AG04449 (cell line): ENCODE measurements at regions of chr22 and their contacts with region 1.

Region 1: GRCh38 chr22:36486619-36487384 is 5.4 kb upstream of the TXN2 start:
- DNase-seq: no peak
- H3K4me3 ChIP-seq: no peak overlapping the region
- CTCF ChIP-seq: peak; percentile 59

Region 2: DNA sequence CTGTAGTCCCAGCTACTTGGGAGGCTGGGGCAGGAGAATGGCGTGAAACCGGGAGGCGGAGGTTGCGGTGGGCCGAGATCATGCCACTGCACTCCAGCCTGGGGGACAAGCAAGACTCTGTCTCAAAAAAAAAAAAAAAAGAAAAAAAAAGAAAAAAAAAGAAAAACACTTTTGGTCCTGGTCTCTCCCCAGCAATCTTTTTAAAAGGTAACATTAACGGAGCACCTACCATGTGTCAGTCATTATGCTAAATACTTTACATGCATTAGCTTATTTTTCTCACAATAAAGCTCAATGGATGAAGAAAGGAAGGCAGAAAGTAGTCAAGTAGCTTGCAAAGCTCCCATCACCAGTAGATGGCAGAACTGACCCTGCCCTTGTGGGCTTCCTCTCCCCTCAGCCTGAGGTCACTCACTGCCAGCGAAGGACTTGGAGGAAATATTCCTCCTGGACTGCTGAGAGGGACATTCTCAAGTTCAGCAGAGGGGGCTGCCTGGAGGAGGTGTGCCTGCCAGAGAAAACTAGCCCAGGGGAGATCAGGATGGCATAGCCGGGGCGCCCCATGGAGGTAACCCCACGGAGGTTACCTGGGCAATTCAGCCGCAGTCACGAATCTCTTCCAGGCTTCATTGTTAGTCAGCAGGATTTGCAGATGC is 341.8 kb before region 1 on chr22:
- CTCF ChIA-PET with region 1: interaction called, 25 read pairs
- POLR2A ChIA-PET with region 1: no interaction called
- DNase-seq: no peak
- H3K4me3 ChIP-seq: no peak overlapping the region
- CTCF ChIP-seq: peak; percentile 72

Region 3: DNA sequence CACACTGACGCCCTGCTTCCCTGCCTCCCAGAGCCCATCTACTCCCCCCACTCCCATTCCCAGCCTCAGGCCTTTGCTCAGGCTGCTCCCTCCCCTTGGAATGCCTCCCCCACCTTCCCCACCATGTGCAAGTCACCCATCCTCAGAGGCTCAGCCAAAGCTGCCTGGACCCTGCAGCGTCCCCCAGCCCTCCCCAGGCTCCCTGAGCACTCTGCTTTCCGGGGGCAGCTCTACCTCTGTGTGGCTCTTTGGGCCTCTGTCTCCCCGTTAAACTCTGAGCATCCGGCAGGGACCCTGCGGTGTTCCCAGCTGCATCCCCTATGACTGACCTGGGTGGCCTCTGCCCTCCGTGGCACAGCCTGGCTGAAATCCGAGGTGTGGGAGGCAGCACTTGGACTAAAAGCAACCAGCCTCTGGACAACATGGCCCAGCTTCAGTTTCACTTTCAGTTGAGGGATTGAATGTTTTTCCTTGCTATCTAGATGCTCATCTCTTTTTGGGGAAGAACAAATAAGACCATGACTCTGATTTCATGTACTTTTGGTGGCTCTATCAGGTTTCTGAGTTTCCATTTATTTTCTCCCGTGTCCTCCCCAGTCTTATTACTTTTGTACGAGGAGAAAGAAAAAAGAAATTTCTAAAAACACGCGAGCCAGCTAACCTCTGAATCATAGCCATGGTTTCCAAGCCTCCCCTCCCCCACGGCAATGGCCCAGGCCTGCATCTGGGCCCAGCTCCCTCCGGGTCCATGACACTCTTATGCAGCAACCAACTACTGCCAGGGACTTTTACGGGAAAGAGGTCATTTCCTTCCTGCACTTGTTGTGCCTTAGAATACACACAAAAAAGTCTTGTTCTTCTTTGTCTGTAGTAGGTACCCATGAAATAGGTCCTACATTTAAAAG is 330.0 kb before region 1 on chr22:
- CTCF ChIA-PET with region 1: interaction called, 11 read pairs
- POLR2A ChIA-PET with region 1: no interaction called
- DNase-seq: no peak
- H3K4me3 ChIP-seq: peak overlapping the region; percentile 49
- CTCF ChIP-seq: no peak

Region 4: DNA sequence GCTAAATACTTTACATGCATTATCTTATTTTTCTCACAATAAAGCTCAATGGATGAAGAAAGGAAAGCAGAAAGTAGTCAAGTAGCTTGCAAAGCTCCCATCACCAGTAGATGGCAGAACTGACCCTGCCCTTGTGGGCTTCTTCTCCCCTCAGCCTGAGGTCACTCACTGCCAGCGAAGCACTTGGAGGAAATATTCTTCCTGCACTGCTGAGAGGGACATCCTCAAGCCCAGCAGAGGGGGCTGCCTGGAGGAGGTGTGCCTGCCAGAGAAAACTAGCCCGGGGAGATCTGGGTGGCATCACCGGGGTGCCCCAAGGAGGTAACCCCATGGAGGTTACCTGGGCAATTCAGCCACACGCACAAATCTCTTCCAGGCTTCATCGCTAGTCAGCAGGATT is 291.8 kb before region 1 on chr22:
- CTCF ChIA-PET with region 1: interaction called, 64 read pairs
- POLR2A ChIA-PET with region 1: no interaction called
- DNase-seq: no peak
- H3K4me3 ChIP-seq: no peak overlapping the region
- CTCF ChIP-seq: peak; percentile 65

Region 5: GRCh38 chr22:36301384-36301828 is 185.4 kb before region 1 on chr22:
- CTCF ChIA-PET with region 1: interaction called, 44 read pairs
- POLR2A ChIA-PET with region 1: interaction called, 4 read pairs
- DNase-seq: no peak
- H3K4me3 ChIP-seq: no peak overlapping the region
- CTCF ChIP-seq: peak; percentile 88

Region 6: GRCh38 chr22:36371920-36372319 is 114.9 kb before region 1 on chr22:
- CTCF ChIA-PET with region 1: no interaction called
- POLR2A ChIA-PET with region 1: no interaction called
- DNase-seq: no peak
- H3K4me3 ChIP-seq: no peak overlapping the region
- CTCF ChIP-seq: no peak